PC-9 (cell line): ENCODE measurements at regions of chr1 and their contacts with region 1.

Region 1: GRCh38 chr1:67766141-67766978 is 66.9 kb downstream of the GNG12 start:
- DNase-seq: peak in 1 of 2 experiments; percentile 44
- H3K4me3 ChIP-seq: no peak overlapping the region
- H3K27ac ChIP-seq: no peak overlapping the region
- H3K4me1 ChIP-seq: no peaks in the 10 kb centered on the region
- H3K27me3 ChIP-seq: no peaks in the 10 kb centered on the region
- CTCF ChIP-seq: peak; percentile 99

Region 2: DNA sequence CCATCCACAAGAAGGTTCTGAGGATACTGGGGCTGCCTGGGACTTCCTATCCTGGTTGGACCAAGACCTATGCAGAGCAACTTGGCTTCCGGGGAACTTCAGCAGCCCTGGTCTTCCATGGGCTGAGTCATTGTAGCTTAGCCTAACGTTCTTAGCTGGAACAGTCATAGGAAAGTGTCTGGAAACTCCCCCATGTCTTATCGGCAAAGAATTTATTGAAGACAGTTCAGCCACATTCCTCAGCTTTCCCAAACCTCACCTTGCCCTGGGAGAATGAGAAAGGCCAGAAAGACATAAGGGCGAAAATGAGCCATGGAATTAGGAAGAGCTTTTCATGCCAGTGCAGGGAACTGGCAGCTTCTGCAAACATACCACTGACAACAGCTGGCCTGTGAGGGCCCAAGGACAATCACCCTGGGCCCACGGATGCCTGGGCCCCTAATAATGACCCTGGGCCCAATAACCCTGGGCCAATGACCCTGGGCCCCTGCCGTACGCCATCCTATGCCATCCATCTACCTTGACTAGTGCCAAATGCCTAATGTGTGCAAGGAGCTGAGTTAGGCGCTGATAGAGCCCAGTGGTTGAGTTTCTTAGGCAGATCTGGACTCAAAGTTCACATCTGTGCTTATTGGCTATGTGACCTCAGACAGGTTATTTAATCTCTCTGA is 195.8 kb before region 1 on chr1:
- CTCF ChIA-PET with region 1: no interaction called
- POLR2A ChIA-PET with region 1: no interaction called
- intact Hi-C with region 1: no loop called
- DNase-seq: peak; percentile 77 to 99
- H3K4me3 ChIP-seq: peak overlapping the region; percentile 4; the same call in 1 of the 2 replicates
- H3K27ac ChIP-seq: peak overlapping the region; percentile 94
- H3K4me1 ChIP-seq: peaks cover 47% of the 10 kb centered on the region
- H3K27me3 ChIP-seq: no peaks in the 10 kb centered on the region
- CTCF ChIP-seq: no peak

Region 3: GRCh38 chr1:67682659-67683197 is 83.6 kb before region 1 on chr1:
- CTCF ChIA-PET with region 1: no interaction called
- POLR2A ChIA-PET with region 1: no interaction called
- intact Hi-C with region 1: no loop called
- DNase-seq: peak; percentile 34 to 96
- H3K4me3 ChIP-seq: peak overlapping the region; percentile 52; the same call in 1 of the 2 replicates
- H3K27ac ChIP-seq: peak overlapping the region; percentile 99
- H3K4me1 ChIP-seq: peaks cover 56% of the 10 kb centered on the region
- H3K27me3 ChIP-seq: no peaks in the 10 kb centered on the region
- CTCF ChIP-seq: no peak

Region 4: GRCh38 chr1:67735806-67736627 is 30.3 kb before region 1 on chr1:
- CTCF ChIA-PET with region 1: no interaction called
- POLR2A ChIA-PET with region 1: no interaction called
- intact Hi-C with region 1: no loop called
- DNase-seq: peak; percentile 71 to 78
- H3K4me3 ChIP-seq: no peak overlapping the region
- H3K27ac ChIP-seq: peak overlapping the region; percentile 22; the same call in 1 of the 2 replicates
- H3K4me1 ChIP-seq: peaks cover 9% of the 10 kb centered on the region
- H3K27me3 ChIP-seq: no peaks in the 10 kb centered on the region
- CTCF ChIP-seq: no peak

Region 5: GRCh38 chr1:67791686-67792475 is 25.5 kb after region 1 on chr1:
- CTCF ChIA-PET with region 1: no interaction called
- POLR2A ChIA-PET with region 1: no interaction called
- intact Hi-C with region 1: loop called (anchors 1 kb)
- DNase-seq: peak; percentile 60 to 89
- H3K4me3 ChIP-seq: no peak overlapping the region; the same call in 1 of the 2 replicates
- H3K27ac ChIP-seq: peak overlapping the region; percentile 84
- H3K4me1 ChIP-seq: peaks cover 45% of the 10 kb centered on the region
- H3K27me3 ChIP-seq: no peaks in the 10 kb centered on the region
- CTCF ChIP-seq: no peak

Region 6: GRCh38 chr1:67853704-67854103 is 87.3 kb after region 1 on chr1:
- CTCF ChIA-PET with region 1: interaction called, 6 read pairs
- POLR2A ChIA-PET with region 1: no interaction called
- intact Hi-C with region 1: loop called (anchors 1 kb)
- DNase-seq: peak; percentile 48 to 64
- H3K4me3 ChIP-seq: no peak overlapping the region
- H3K27ac ChIP-seq: no peak overlapping the region
- H3K4me1 ChIP-seq: peaks cover 11% of the 10 kb centered on the region
- H3K27me3 ChIP-seq: no peaks in the 10 kb centered on the region
- CTCF ChIP-seq: peak; percentile 93

Region 7: GRCh38 chr1:68010090-68010489 is 243.7 kb after region 1 on chr1:
- CTCF ChIA-PET with region 1: interaction called, 13 read pairs
- POLR2A ChIA-PET with region 1: interaction called, 3 read pairs
- intact Hi-C with region 1: loop called (anchors 1 kb)
- DNase-seq: no peak
- H3K4me3 ChIP-seq: no peak overlapping the region
- H3K27ac ChIP-seq: no peak overlapping the region
- H3K4me1 ChIP-seq: no peaks in the 10 kb centered on the region
- H3K27me3 ChIP-seq: peaks cover 6% of the 10 kb centered on the region; the same call in 1 of the 2 replicates
- CTCF ChIP-seq: peak; percentile 60

Region 8: DNA sequence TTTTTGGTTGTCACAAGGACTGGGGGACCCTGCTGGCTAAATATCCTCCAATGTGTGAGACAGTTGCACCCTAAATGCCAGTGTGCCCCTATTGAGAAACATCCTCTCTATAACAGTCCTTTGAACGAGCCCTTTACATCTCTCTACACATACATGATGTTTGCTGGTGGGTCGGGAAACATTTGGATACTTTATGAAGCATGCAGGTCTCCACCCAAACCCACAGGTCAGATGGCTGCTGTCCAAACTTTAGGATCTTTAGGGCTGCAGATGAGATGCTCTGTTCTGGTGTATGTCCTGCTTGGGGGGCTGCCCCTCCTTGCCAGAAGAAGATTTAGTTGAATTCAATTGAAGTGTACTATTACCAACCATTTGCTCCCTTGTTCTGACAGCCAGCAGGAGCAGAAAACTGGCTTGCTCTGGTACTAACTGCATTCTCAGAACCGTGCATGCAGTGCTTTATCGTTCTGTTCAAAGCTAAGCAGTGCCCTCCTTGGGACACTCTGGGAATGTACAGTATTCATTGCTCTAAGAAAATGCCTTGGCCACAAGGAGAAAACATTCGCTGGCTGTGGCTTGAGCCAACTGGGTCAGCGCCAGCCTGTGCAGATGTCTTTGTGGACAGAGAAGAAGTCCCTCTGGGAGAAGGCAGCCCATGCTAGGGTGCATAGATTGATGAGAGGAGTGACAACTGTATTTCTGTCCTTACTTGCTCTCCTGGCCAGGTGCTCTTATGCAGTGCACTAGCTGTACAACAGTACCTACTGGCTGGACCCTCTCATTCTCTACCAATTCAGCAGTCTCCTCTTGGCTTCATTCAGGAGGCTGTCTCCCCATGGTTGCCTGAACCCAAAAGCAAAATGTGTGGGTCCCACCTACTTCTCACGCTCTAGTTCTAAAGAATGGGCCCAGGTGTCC is 345.4 kb after region 1 on chr1:
- CTCF ChIA-PET with region 1: no interaction called
- POLR2A ChIA-PET with region 1: no interaction called
- intact Hi-C with region 1: loop called (anchors 1 kb)
- DNase-seq: peak; percentile 46 to 50
- H3K4me3 ChIP-seq: no peak overlapping the region
- H3K27ac ChIP-seq: no peak overlapping the region
- H3K4me1 ChIP-seq: no peaks in the 10 kb centered on the region
- H3K27me3 ChIP-seq: no peaks in the 10 kb centered on the region
- CTCF ChIP-seq: peak; percentile 73